ENCODE measurements at regions of chr11 and their contacts with region 1.

Region 1: GRCh38 chr11:61332797-61333549 is at the starts of genes DDB1 and TKFC:
- DNase-seq: peak; percentile 98
- ATAC-seq: peak; percentile 94
- H3K4me3 Mint-ChIP-seq: peak within 1 kb of the TSS; percentile 81
- H3K27ac Mint-ChIP-seq: peak within 1 kb of the TSS; percentile 94
- H3K4me1 Mint-ChIP-seq: peaks cover 67% of the 10 kb centered on the region
- H3K27me3 Mint-ChIP-seq: no peaks in the 10 kb centered on the region
- total RNA-seq, gene DDB1: 202 to 214 TPM
- total RNA-seq, gene TKFC: 24.1 to 26.4 TPM

Region 2: DNA sequence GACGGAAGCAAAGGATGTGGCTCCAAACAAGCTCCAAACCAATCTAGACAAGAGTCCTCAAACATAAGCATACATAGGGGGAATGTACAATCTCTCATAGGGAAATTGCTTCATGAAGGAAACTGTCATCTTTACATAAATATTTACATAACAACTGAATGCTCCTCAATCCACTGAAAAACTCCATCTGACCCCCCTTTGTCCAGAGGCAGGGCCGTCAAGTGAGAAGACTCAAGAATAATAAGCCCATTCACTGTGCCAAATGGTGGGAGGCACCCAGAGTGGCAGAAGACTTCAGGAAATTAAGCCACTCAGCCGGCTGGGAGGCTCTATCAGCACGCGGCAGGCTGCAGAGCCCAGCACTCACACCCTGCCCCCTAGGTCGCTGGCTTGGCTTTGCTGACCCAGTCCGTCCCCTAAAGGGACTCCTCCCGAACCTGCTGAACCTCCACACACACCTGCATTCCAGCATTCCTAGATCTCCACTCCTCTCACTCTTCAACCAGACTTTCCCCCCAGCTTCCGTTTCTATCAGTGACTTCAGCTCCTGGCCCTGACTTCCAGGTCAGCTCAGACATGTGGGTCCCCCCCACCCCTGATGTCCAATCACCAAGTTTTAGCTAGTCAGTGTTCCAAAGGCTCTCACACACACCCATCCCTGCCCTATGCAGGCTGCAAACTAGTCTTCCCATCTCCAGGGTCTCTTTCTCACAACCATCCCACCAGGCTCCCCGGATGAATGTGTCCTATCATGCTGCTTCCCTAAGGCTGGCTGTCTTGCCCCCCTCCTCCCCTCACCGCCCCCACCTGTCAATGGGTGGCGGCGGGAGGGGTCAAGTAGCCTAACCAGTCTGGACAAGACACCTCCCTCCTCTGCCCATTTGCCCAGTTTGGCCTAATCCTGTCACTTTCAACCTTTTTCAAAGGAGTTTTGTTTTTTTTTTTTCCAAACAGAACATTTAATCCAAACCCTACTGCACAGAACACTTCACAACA is 183.1 kb before region 1 on chr11:
- CTCF ChIA-PET with region 1: no interaction called
- POLR2A ChIA-PET with region 1: no interaction called
- DNase-seq: no peak
- ATAC-seq: no peak
- H3K4me3 Mint-ChIP-seq: no peak overlapping the region
- H3K27ac Mint-ChIP-seq: no peak overlapping the region
- H3K4me1 Mint-ChIP-seq: peaks cover 10% of the 10 kb centered on the region
- H3K27me3 Mint-ChIP-seq: no peaks in the 10 kb centered on the region

Region 3: GRCh38 chr11:61254403-61255025 is 78.5 kb before region 1 on chr11:
- CTCF ChIA-PET with region 1: interaction called, 20 read pairs
- POLR2A ChIA-PET with region 1: no interaction called
- DNase-seq: peak; percentile 78
- ATAC-seq: peak; percentile 96
- H3K4me3 Mint-ChIP-seq: no peak overlapping the region
- H3K27ac Mint-ChIP-seq: no peak overlapping the region
- H3K4me1 Mint-ChIP-seq: no peaks in the 10 kb centered on the region
- H3K27me3 Mint-ChIP-seq: no peaks in the 10 kb centered on the region

Region 4: GRCh38 chr11:61353131-61354067 is 20.4 kb after region 1 on chr11:
- CTCF ChIA-PET with region 1: interaction called, 39 read pairs
- POLR2A ChIA-PET with region 1: interaction called, 6 read pairs
- DNase-seq: no peak
- ATAC-seq: no peak
- H3K4me3 Mint-ChIP-seq: no peak overlapping the region
- H3K27ac Mint-ChIP-seq: peak overlapping the region; percentile 22
- H3K4me1 Mint-ChIP-seq: no peaks in the 10 kb centered on the region
- H3K27me3 Mint-ChIP-seq: no peaks in the 10 kb centered on the region

Region 5: GRCh38 chr11:61377461-61378160 is 44.6 kb after region 1 on chr11:
- CTCF ChIA-PET with region 1: interaction called, 390 read pairs
- POLR2A ChIA-PET with region 1: interaction called, 6 read pairs
- DNase-seq: no peak
- ATAC-seq: no peak
- H3K4me3 Mint-ChIP-seq: no peak overlapping the region
- H3K27ac Mint-ChIP-seq: no peak overlapping the region
- H3K4me1 Mint-ChIP-seq: no peaks in the 10 kb centered on the region
- H3K27me3 Mint-ChIP-seq: no peaks in the 10 kb centered on the region

Region 6: DNA sequence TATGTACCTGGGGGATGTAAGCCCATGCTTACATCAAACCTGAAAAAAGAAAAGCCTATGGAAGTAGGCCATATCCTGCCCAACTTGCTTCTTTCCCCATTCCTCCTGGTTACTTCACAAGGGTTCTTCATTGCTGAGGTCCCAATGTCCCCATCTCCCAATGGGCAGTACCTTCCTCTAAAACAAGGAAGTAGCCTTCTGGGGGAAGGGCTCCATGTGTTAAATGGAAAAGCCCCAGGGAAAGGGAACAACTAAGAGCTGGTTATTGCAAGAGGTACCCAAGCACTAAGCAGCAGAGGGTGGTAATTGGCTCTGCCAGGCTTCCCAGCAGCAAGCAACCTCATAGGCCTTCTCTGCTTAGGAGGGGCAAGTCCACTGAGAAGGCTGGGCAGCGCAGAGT is 70.7 kb after region 1 on chr11:
- CTCF ChIA-PET with region 1: interaction called, 15 read pairs
- POLR2A ChIA-PET with region 1: interaction called, 3 read pairs
- DNase-seq: no peak
- ATAC-seq: no peak
- H3K4me3 Mint-ChIP-seq: no peak overlapping the region
- H3K27ac Mint-ChIP-seq: no peak overlapping the region
- H3K4me1 Mint-ChIP-seq: no peaks in the 10 kb centered on the region
- H3K27me3 Mint-ChIP-seq: no peaks in the 10 kb centered on the region

Region 7: GRCh38 chr11:61516675-61517572 is 184.0 kb after region 1 on chr11:
- CTCF ChIA-PET with region 1: interaction called, 15 read pairs
- POLR2A ChIA-PET with region 1: no interaction called
- DNase-seq: peak; percentile 65
- ATAC-seq: peak; percentile 66
- H3K4me3 Mint-ChIP-seq: no peak overlapping the region
- H3K27ac Mint-ChIP-seq: no peak overlapping the region
- H3K4me1 Mint-ChIP-seq: peaks cover 4% of the 10 kb centered on the region
- H3K27me3 Mint-ChIP-seq: no peaks in the 10 kb centered on the region